ENCODE measurements at regions of chr6 and their contacts with region 1.

Region 1: GRCh38 chr6:140078561-140079125 is 704.2 kb upstream of the CITED2 start:
- DNase-seq: no peak
- ATAC-seq: peak; percentile 57

Region 2: GRCh38 chr6:139764498-139764986 is 314.1 kb before region 1 on chr6:
- intact Hi-C with region 1: loop called (anchors 10 kb)
- DNase-seq: no peak
- ATAC-seq: peak; percentile 94

Region 3: DNA sequence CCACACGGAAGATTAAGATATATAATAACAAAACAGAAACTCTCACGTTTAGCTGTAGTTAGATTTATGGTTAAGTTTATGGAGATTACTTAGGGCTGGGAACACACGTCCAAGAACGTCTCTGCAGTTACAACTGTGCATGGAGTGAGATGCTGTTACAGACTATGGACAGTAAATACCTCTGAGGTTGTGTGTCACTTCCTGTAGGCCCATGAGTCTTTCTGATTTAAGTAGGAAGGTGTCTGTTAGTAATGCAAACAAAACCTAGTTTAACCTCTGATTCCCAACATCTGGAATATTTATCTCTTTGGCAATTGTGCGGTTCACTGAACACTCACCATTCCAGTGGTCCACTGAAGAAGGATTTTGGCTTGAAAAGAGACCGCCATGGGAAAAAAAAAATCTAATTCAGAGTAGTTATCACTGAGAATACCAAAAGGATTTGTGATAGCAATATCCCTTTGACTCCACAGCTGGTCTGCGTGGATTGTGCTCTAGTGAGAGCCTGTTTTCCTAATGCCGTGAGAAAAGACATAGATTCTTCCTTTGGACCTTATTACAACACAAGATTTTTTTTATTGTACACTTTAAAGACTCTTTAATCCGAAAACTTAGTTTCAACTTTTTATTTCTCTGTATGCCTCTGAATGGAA is 226.0 kb before region 1 on chr6:
- intact Hi-C with region 1: no loop called
- DNase-seq: no peak
- ATAC-seq: no peak

Region 4: GRCh38 chr6:139881728-139882211 is 196.9 kb before region 1 on chr6:
- intact Hi-C with region 1: loop called (anchors 2 kb)
- DNase-seq: peak; percentile 73
- ATAC-seq: peak; percentile 52

Region 5: GRCh38 chr6:139973669-139974344 is 104.8 kb before region 1 on chr6:
- intact Hi-C with region 1: loop called (anchors 2 kb)
- DNase-seq: no peak
- ATAC-seq: peak; percentile 77

Region 6: DNA sequence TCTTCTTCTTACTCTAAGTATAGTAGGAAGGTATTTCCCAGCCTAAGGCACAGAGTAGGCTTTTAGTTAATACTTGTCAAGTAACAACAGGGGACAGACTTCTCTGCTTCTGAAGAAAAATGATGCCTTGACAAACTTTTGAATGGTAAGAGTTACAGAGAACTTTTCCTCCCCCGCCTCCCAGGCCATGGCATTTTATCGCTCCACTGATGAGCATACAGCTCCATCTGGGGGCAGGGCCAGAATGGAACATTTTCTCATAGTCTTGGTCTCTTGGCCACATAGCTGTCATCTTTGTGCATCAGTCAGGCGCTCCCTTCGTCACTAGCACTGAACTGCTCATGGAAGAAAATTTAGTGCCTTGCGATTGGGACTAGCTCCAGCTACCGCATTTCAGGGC is 362.6 kb after region 1 on chr6:
- intact Hi-C with region 1: loop called (anchors 2 kb)
- DNase-seq: peak; percentile 44
- ATAC-seq: peak; percentile 92

Region 7: GRCh38 chr6:140774080-140774505 is 695.5 kb after region 1 on chr6:
- intact Hi-C with region 1: loop called (anchors 10 kb)
- DNase-seq: no peak
- ATAC-seq: peak; percentile 95

Measured in Right ventricle myocardium inferior (tissue), 1 donor.